ENCODE measurements at regions of chr1 and their contacts with region 1.

Region 1: GRCh38 chr1:179190861-179191260 is 38.6 kb downstream of the ABL2 start:
- DNase-seq: no peak
- ATAC-seq: no peak
- H3K4me3 ChIP-seq: no peak overlapping the region
- H3K27ac ChIP-seq: no peak overlapping the region
- H3K4me1 ChIP-seq: peaks cover 21% of the 10 kb centered on the region
- H3K27me3 ChIP-seq: no peaks in the 10 kb centered on the region
- CTCF ChIP-seq: no peak
- EP300 ChIP-seq: no peak
- POLR2A ChIP-seq: no peak
- RAD21 ChIP-seq: no peak

Region 2: DNA sequence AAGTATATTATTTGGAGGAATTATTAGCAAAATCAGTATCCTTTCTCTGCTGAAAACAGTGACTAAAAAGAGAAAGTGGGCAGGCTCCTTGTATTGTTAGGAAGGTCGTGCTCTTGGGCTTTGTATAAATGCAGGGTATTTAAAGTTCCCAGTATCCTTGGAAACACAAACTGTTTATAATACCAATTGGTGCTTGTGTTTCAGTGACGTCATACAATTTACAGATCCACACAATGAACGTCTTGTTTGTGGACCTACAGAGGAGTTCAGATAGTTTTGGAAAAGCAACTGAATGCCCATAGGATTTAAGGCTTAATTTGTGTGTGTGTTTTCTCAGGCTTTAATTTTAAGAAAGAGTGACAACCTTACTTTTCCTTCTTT is 928.8 kb before region 1 on chr1:
- CTCF ChIA-PET with region 1: no interaction called
- POLR2A ChIA-PET with region 1: no interaction called
- in situ Hi-C with region 1: no loop called
- intact Hi-C with region 1: no loop called
- DNase-seq: peak; percentile 71
- ATAC-seq: peak; percentile 37; the same call in 2 of the 3 replicates
- H3K4me3 ChIP-seq: no peak overlapping the region
- H3K27ac ChIP-seq: peak overlapping the region; percentile 19
- H3K4me1 ChIP-seq: peaks cover 21% of the 10 kb centered on the region
- H3K27me3 ChIP-seq: no peaks in the 10 kb centered on the region
- CTCF ChIP-seq: no peak
- EP300 ChIP-seq: no peak
- POLR2A ChIP-seq: no peak
- RAD21 ChIP-seq: no peak

Region 3: DNA sequence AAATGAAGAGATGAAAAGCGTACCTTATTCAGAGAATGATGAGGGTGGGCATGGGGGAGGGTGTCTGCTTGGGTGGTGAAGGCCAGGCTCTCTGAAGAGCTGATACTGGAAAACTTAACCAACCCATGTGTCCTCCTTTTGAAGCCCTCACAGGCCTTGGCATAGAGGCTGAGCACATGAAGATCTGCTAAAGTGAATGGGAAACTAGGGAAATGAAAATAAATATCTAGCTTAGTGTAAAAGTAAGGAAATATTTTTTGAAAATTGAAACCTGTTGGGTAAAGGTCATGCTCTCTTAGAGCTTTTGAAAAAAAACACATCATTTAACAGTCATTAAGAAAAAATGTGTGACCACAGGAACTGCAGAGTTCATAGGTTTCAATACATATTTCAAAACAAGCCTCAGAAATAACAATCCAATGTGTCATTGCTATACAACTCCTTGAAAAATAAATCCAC is 506.3 kb before region 1 on chr1:
- CTCF ChIA-PET with region 1: no interaction called
- POLR2A ChIA-PET with region 1: no interaction called
- in situ Hi-C with region 1: no loop called
- intact Hi-C with region 1: no loop called
- DNase-seq: peak; percentile 52
- ATAC-seq: no peak
- H3K4me3 ChIP-seq: no peak overlapping the region
- H3K27ac ChIP-seq: peak overlapping the region; percentile 25
- H3K4me1 ChIP-seq: peaks cover 41% of the 10 kb centered on the region
- H3K27me3 ChIP-seq: no peaks in the 10 kb centered on the region
- CTCF ChIP-seq: no peak
- EP300 ChIP-seq: peak in 1 of 2 experiments; percentile 62; a peak in 1 of 4 replicates
- POLR2A ChIP-seq: no peak
- RAD21 ChIP-seq: no peak

Region 4: DNA sequence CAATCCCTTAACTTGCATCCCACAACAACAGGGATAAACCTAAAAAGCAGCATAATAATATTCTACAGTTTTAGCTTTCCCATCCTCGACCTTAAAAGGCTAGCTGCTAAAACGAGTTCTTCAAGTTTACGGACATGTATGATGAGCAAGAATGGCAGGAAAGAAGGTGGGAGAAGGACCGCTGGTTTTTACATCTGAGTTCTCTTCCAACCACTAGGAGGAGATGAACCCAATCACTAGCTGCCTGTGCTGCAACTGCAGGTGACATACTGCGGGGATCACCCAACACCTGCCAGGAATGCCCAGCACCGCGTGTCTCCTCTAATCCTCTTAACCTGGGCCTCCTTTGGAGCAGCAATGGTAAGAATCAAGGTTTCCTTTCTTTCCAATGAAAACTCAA is 85.5 kb before region 1 on chr1:
- CTCF ChIA-PET with region 1: interaction called, 3 read pairs
- POLR2A ChIA-PET with region 1: no interaction called
- in situ Hi-C with region 1: no loop called
- intact Hi-C with region 1: loop called (anchors 5 kb)
- DNase-seq: peak; percentile 55
- ATAC-seq: peak; percentile 79
- H3K4me3 ChIP-seq: no peak overlapping the region; a peak in 1 of 6 replicates
- H3K27ac ChIP-seq: peak overlapping the region; percentile 66
- H3K4me1 ChIP-seq: peaks cover 57% of the 10 kb centered on the region
- H3K27me3 ChIP-seq: no peaks in the 10 kb centered on the region
- CTCF ChIP-seq: peak; percentile 72
- EP300 ChIP-seq: no peak
- POLR2A ChIP-seq: no peak
- RAD21 ChIP-seq: no peak; the same call in 1 of the 2 replicates

Region 5: GRCh38 chr1:179121159-179121938 is 69.5 kb before region 1 on chr1:
- CTCF ChIA-PET with region 1: interaction called, 30 read pairs
- POLR2A ChIA-PET with region 1: no interaction called
- in situ Hi-C with region 1: loop called (anchors 5 kb)
- intact Hi-C with region 1: loop called (anchors 1 kb)
- DNase-seq: peak; percentile 25
- ATAC-seq: peak; percentile 48
- H3K4me3 ChIP-seq: no peak overlapping the region
- H3K27ac ChIP-seq: no peak overlapping the region
- H3K4me1 ChIP-seq: no peaks in the 10 kb centered on the region
- H3K27me3 ChIP-seq: no peaks in the 10 kb centered on the region
- CTCF ChIP-seq: peak; percentile 62
- EP300 ChIP-seq: no peak
- POLR2A ChIP-seq: no peak
- RAD21 ChIP-seq: peak; percentile 55

Region 6: DNA sequence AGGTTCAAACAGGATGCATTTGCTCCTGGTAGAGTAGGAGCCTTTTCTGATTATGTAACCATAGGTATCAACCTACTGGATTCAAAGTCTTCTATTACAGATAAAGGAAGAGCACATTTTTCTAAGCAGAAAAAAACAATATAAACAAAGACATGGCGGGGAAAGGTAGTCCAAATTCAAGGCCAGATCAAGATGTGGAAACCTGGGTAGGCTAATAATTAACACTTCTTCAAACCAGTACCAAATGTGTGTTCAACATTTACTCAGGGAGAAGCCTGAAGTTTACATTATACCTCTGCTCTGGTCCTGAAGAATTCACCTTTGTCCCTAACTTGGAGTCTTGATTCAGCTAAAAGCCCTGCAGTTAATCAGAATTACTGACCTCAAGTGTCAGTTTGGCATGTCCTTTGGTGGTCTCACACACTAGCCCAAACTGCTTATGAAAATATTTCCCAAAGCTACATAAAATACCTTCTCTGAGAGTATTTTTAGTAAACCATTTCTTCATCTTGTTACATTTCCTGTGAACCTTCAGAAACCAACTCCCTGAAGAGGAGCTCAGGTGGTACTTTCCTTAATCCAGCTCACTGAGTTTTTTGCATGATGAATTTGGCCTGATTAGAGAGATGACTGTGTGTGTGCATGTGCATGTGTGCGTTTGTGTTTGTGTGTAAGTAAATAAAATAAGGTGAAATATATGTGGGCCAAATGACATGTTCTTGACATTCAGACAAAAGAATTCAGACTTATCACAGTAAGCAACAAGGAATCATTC is 38.8 kb before region 1 on chr1:
- CTCF ChIA-PET with region 1: no interaction called
- POLR2A ChIA-PET with region 1: no interaction called
- in situ Hi-C with region 1: no loop called
- intact Hi-C with region 1: no loop called
- DNase-seq: peak; percentile 95
- ATAC-seq: peak; percentile 99
- H3K4me3 ChIP-seq: peak overlapping the region in 2 of 3 experiments; percentile 23 to 31; a peak in 3 of 6 replicates
- H3K27ac ChIP-seq: peak overlapping the region; percentile 71
- H3K4me1 ChIP-seq: peaks cover 70% of the 10 kb centered on the region
- H3K27me3 ChIP-seq: no peaks in the 10 kb centered on the region
- CTCF ChIP-seq: no peak
- EP300 ChIP-seq: peak in 1 of 2 experiments; percentile 89; a peak in 2 of 4 replicates
- POLR2A ChIP-seq: no peak
- RAD21 ChIP-seq: no peak

Measured in HepG2 (cell line).